Posterior cingulate gyrus (tissue), 11 donors: ENCODE measurements at regions of chr6 and their contacts with region 1.

Region 1: DNA sequence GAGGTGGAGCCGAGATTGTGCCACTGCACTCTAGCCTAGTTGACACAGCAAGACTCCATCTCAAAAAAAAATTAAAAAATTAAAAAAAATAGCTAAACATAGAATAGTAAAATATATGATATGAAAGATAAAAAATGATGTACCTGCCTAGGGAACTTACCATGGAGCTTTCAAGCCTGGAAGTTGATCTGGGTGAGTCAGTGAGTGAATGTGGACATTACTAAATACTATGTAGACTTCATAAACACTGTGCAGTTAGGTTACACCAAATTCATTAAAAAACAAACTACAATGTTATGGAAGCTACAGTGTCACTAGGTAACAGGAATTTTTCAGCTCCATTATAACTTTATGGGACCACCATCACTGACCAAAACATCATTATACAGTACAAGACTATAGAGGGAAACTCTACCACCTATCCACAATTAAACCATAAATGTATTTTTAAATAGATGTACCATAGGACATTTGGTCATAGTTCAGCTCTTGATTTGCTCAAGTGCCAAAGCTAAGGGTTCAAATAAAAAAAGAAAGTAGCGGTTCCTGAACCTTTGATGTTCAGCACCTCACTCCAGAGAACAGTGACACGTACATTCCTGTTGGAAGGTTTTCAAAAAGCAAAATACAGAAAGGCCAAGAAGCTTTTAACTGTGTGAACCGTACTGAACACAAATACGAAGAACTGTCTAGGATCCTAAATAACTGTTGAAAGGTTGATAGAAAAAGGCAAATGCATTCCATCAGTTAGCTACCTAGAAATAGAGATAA is 52.4 kb upstream of the SPDEF start:
- DNase-seq: peak in 1 of 10 donors; percentile 59

Region 2: DNA sequence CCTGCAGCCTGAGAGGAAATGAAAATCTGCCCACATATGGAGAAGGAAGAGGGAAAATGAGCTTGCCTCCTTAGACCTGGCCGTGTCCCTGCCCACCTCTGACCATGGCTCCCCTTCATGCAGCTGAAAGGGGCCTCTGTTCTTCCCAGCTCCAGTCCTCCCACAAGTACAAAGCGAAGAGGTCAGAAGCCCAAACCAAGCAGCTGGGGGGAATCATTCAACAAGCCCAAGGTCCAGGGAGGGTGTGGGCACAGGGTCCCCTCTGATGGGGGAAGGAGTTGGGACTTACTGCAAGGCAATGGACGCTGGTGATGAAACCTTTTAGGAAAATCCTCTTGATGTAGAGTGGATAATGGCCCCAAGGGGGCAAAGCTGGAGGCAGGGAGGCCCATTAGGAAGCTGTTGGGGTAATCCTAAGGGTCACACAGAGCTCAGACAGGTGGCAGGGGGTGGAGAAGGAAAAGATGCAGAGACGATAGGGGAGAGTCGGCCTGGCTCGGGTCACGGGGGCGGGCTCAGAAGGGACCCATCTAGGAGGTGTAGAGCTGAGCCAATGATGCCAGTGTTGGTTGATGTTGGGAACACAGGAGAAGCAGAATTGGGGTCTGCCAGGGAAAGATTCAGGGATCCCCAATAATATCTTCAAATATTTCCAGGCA is 446.5 kb before region 1 on chr6:
- intact Hi-C with region 1: loop called (anchors 2 kb)
- DNase-seq: peak in 4 of 10 donors; percentile 3 to 52 (median 36)

Region 3: DNA sequence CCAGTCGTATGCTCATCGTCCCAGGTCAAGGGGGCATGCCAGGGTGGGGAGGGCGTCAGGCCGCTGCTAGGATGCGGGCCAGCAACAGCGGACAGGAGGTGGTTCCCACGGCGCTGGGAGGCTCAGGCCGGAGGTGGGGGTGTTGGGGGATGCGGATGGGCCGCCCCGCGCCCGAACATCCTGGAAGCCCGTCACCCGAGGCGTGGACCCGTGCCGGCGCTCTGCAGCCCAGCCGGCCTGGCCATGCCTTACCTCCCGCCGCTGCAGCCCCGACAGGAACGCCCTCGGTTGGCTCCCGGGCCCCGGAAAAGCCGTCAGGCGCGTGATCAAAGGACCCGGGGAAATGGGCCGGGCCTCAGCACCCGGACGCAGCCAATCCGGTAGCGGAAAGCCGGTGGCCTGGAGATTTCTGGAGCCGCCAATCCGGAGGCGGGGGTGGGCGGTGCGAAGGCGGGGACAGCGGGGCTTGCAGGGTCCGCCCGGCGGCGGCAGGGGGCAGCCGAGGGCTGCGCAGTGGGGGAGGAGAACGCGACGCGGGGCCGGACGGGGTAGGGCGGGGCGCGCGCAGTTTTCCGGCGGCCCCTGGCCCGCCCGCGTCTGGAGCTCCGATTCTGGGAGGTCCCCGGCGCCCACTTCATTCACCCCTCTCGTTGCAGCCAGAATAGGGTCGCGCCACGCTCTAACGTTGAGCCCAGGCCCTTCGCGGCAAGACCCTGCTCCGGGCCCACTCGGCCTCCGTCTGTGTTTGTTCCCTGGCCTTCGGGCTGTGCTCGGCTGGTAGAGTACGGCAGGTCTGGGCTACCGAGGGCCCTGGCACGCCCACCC is 359.6 kb before region 1 on chr6 and contains the start of gene SMIM29:
- intact Hi-C with region 1: loop called (anchors 5 kb)
- DNase-seq: peak; percentile 97 to 100 (median 98)

Region 4: DNA sequence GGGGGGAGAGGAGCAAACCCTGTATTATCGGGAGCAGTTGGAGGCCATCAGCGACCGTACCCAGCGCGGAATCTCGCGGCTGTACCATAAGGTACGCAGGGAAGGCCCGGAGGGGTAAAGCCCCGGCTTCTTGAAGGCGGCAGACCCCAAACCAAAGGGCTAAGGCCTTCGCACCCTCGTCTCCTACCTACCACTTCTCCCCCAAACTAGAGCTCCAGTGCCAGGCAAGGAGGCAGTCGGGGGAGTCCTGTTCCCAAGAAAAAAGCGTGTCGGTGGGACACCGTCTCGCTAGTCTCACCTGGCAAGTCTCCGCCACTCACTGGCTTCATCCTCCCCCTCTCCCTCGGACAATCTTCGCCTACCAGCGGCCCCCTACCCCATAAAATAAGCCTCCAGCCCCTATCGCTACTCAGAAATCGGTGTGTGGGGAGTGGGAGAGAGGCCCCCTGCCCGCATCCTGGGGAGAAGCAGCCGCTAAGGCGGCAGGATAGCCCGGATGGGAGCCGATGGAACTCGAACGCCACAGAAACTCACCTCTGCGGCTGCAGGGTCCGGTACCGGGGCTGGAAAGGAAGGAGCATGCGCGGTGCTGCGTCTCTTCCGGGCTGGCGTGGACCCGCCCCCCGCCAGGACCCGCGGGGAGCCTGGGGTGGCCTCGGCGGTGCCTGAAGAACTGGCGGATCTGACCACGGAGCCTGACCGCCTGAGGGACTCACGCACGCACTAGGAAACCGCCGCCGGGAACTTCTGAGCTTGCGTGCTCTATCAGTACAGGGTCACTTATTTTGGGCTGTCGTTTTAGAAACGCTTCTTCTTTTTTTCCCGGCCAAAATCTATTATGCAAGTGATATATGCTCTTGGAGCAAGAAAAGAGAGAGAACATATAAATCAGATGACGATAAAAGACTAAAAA is 182.8 kb before region 1 on chr6 and contains the start of gene RPS10:
- intact Hi-C with region 1: loop called (anchors 5 kb)
- DNase-seq: peak; percentile 87 to 99 (median 92)

Region 5: GRCh38 chr6:34459899-34460593 is 148.5 kb before region 1 on chr6:
- intact Hi-C with region 1: loop called (anchors 5 kb)
- DNase-seq: peak in 3 of 10 donors; percentile 33 to 69 (median 35)

Region 6: GRCh38 chr6:34526992-34527728 is 81.3 kb before region 1 on chr6:
- intact Hi-C with region 1: loop called (anchors 5 kb)
- DNase-seq: peak; percentile 81 to 99 (median 94)